ENCODE measurements at regions of chr2 and their contacts with region 1.

Region 1: GRCh38 chr2:174487108-174487819 is 435 bp upstream of the GPR155 start:
- DNase-seq: peak; percentile 100
- ATAC-seq: peak; percentile 100

Region 2: GRCh38 chr2:174561972-174562370 is 74.7 kb after region 1 on chr2:
- intact Hi-C with region 1: loop called (anchors 2 kb)
- DNase-seq: no peak
- ATAC-seq: no peak

Measured in Right ventricle myocardium inferior (tissue), 1 donor.